HEK293 (cell line): ENCODE measurements at regions of chr20 and their contacts with region 1.

Region 1: DNA sequence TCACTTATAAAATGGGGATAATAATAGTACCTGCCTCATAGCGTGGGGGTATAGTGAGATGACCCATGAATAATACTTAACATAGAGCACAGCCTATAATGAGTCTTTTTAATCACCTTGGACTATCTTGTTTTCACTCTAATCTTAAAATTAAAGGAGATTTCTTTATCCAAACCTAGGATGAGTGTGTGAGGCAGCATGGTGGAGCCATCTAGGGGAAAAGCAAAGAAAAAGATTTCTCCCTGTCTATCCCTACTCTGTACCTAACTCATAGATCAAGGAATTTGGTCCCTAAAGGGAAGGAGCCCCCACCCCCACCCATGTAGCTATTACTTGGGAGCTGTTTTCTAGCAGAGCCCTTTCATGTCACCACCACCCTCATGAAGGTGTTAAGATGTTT is 45.2 kb upstream of the PAK5 start:
- H3K4me3 ChIP-seq: no peak overlapping the region
- H3K27ac ChIP-seq: no peak overlapping the region
- H3K4me1 ChIP-seq: no peaks in the 10 kb centered on the region
- CTCF ChIP-seq: no peak

Region 2: DNA sequence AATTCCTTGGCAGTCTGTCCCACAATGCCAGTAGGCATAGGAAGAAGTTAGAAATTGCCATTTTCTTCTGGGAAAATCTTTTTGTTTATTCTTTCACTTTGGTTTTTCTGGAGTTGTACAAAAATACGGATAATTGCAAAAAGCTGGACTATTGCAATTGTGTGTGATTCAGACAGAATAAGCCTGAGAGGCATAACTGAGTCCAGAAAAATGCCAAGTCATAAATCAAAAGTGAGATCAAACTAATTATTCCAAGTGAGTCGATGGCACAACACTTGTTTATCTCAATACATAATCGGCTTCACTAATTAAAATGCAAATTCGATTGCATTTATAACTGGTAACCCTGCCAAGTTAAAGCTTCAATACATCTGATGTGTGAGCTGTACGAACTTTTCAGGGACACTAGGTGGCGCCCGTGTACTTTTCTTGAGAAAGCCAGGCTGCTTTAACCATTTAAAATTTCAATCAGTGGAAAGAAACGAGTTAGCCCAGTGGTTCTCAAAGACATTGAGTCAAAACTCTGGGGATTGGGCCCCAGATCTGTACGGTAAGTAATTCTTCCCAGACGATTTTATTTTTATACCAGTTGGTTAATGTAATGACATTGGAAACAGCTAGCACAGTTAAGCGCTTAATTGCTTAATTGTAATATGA is 267.1 kb before region 1 on chr20:
- CTCF ChIA-PET with region 1: interaction called, 23 read pairs
- POLR2A ChIA-PET with region 1: no interaction called
- H3K4me3 ChIP-seq: no peak overlapping the region
- H3K27ac ChIP-seq: no peak overlapping the region
- H3K4me1 ChIP-seq: no peaks in the 10 kb centered on the region
- CTCF ChIP-seq: 0 out of 2 replicates have a peak, but pooled peaks have one; percentile 10

Region 3: DNA sequence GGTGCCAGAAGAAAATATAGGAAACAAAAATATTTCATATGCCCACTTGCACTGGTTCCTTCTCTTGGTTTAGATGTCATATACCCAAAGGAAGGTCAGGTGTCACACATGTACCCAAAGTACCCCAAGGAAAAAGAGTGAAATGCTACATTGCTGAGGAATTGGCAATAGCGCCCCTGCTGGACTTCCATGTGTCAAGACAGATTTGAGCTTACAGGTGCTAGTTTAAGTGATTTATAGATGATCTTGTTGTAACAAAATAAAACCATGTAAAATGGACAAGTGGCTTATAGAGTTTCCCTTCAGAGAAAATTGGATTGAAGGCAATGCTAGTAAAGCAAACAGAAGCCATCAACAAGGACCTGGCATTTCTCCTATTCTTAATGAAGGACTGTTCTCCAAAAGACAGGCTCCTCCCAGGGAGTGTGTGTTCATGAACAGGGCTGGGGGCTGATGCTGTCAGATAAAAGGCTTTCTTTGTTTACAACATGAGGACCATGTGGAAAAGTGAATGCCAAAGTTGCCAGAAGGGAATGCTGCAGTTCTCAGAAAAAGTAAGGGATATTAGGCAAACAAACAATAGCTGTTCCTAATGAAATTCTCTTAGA is 19.1 kb after region 1 on chr20:
- CTCF ChIA-PET with region 1: interaction called, 13 read pairs
- POLR2A ChIA-PET with region 1: no interaction called
- H3K4me3 ChIP-seq: no peak overlapping the region
- H3K27ac ChIP-seq: no peak overlapping the region
- H3K4me1 ChIP-seq: no peaks in the 10 kb centered on the region
- CTCF ChIP-seq: no peak